ENCODE measurements at regions of chr20 and their contacts with region 1.

Region 1: GRCh38 chr20:44683263-44684046 is 31.7 kb upstream of the CCN5 start:
- DNase-seq: peak; percentile 64
- H3K4me3 ChIP-seq: no peak overlapping the region
- H3K27ac ChIP-seq: no peak overlapping the region
- H3K4me1 ChIP-seq: no peaks in the 10 kb centered on the region
- H3K27me3 ChIP-seq: no peaks in the 10 kb centered on the region
- CTCF ChIP-seq: peak; percentile 67 to 75
- POLR2A ChIP-seq: no peak

Region 2: GRCh38 chr20:44388466-44389023 is 294.9 kb before region 1 on chr20:
- CTCF ChIA-PET with region 1: interaction called, 27 read pairs
- POLR2A ChIA-PET with region 1: no interaction called
- dilution Hi-C with region 1: no loop called
- intact Hi-C with region 1: loop called (anchors 1 kb)
- DNase-seq: peak; percentile 63
- H3K4me3 ChIP-seq: no peak overlapping the region
- H3K27ac ChIP-seq: no peak overlapping the region
- H3K4me1 ChIP-seq: no peaks in the 10 kb centered on the region
- H3K27me3 ChIP-seq: peaks cover 1 to 2% of the 10 kb centered on the region in 2 experiments
- CTCF ChIP-seq: peak; percentile 76 to 81
- POLR2A ChIP-seq: no peak

Region 3: GRCh38 chr20:44467289-44467883 is 216.1 kb before region 1 on chr20:
- CTCF ChIA-PET with region 1: no interaction called
- POLR2A ChIA-PET with region 1: no interaction called
- dilution Hi-C with region 1: no loop called
- intact Hi-C with region 1: no loop called
- DNase-seq: no peak
- H3K4me3 ChIP-seq: no peak overlapping the region
- H3K27ac ChIP-seq: no peak overlapping the region
- H3K4me1 ChIP-seq: no peaks in the 10 kb centered on the region
- H3K27me3 ChIP-seq: peaks cover 0 to 4% of the 10 kb centered on the region in 2 experiments
- CTCF ChIP-seq: no peak
- POLR2A ChIP-seq: no peak

Region 4: DNA sequence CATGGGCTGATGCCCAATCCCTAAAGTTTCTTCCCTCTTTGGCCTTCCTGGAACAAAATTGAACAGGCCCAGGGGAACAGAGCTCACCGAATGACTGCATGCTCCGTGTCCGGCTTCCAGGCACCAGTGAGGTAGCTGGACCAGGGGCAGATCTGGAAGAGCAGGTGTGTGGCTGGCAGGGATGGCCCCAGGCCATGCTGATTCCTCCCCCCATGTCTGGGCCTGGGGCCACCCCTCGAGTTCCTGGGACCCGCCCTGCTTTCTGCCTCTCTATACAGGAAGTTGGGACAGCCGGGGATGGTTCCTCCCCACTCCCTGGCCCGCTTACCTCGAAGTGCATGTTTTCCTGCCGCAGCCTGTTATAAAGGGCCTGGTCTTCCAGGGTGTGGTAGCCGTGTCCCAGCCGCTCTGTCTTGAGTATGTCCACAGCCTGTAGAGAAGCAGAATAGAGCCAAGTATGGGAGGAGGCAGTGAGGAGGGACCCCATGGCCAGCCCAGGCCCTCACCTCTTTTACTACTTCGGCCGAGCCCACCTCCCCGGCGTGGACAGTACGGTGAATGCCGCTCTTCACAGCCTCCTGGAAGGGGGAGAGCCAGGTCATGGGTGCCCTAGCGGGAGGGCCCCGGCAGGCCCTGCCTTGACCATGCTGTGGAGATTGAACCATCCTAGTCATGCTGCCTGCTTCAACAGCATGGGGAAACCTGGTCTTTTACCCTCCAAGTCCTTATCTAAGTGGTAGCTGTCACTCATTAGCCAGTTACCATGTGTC is 60.8 kb before region 1 on chr20:
- CTCF ChIA-PET with region 1: interaction called, 10 read pairs
- POLR2A ChIA-PET with region 1: no interaction called
- dilution Hi-C with region 1: no loop called
- intact Hi-C with region 1: loop called (anchors 2 kb)
- DNase-seq: no peak
- H3K4me3 ChIP-seq: no peak overlapping the region
- H3K27ac ChIP-seq: no peak overlapping the region
- H3K4me1 ChIP-seq: no peaks in the 10 kb centered on the region
- H3K27me3 ChIP-seq: no peaks in the 10 kb centered on the region
- CTCF ChIP-seq: no peak
- POLR2A ChIP-seq: no peak

Region 5: GRCh38 chr20:44664131-44664530 is 19.3 kb before region 1 on chr20:
- CTCF ChIA-PET with region 1: interaction called, 16 read pairs
- POLR2A ChIA-PET with region 1: no interaction called
- dilution Hi-C with region 1: no loop called
- intact Hi-C with region 1: no loop called
- DNase-seq: no peak
- H3K4me3 ChIP-seq: no peak overlapping the region
- H3K27ac ChIP-seq: no peak overlapping the region
- H3K4me1 ChIP-seq: peaks cover 9% of the 10 kb centered on the region
- H3K27me3 ChIP-seq: peaks cover 4 to 9% of the 10 kb centered on the region in 2 experiments
- CTCF ChIP-seq: no peak
- POLR2A ChIP-seq: no peak

Region 6: GRCh38 chr20:44738813-44739477 is 55.5 kb after region 1 on chr20:
- CTCF ChIA-PET with region 1: interaction called, 310 read pairs
- POLR2A ChIA-PET with region 1: no interaction called
- dilution Hi-C with region 1: no loop called
- intact Hi-C with region 1: no loop called
- DNase-seq: peak; percentile 72
- H3K4me3 ChIP-seq: no peak overlapping the region
- H3K27ac ChIP-seq: no peak overlapping the region
- H3K4me1 ChIP-seq: no peaks in the 10 kb centered on the region
- H3K27me3 ChIP-seq: peaks cover 0 to 11% of the 10 kb centered on the region in 2 experiments
- CTCF ChIP-seq: no peak
- POLR2A ChIP-seq: no peak

Region 7: GRCh38 chr20:44866703-44867335 is 183.4 kb after region 1 on chr20:
- CTCF ChIA-PET with region 1: interaction called, 17 read pairs
- POLR2A ChIA-PET with region 1: no interaction called
- dilution Hi-C with region 1: no loop called
- intact Hi-C with region 1: loop called (anchors 1 kb)
- DNase-seq: no peak
- H3K4me3 ChIP-seq: no peak overlapping the region
- H3K27ac ChIP-seq: no peak overlapping the region
- H3K4me1 ChIP-seq: no peaks in the 10 kb centered on the region
- H3K27me3 ChIP-seq: peaks cover 8 to 14% of the 10 kb centered on the region in 2 experiments
- CTCF ChIP-seq: no peak
- POLR2A ChIP-seq: no peak